Common myeloid progenitor, CD34-positive (primary cell): ENCODE measurements at regions of chr19 and their contacts with region 1.

Region 1: DNA sequence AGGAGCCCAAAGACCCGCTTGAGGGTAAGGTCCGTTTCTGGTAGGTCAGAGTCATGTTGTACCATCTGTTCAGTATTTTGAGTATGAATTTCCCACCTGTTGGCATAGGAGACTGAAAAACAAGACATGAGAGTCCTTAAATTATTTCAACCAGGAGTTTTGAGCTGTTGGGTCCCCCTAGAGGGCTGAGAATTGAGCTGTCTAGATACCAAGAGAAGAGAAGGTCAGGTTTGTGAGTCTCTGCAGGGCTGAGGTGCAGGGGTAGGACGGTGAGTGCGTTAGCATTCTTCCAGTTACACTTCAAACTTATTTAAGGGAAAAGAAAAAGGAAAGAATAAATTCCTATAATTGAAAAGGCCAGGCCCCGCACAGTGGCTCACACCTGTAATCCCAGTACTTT is 5.0 kb downstream of the CBLC start:
- DNase-seq: no peak
- H3K4me3 ChIP-seq: no peak overlapping the region
- H3K27ac ChIP-seq: no peak overlapping the region
- H3K4me1 ChIP-seq: peaks cover 0 to 14% (median 10%) of the 10 kb centered on the region in 4 experiments
- H3K27me3 ChIP-seq: peaks cover 0 to 2% (median 0%) of the 10 kb centered on the region in 5 experiments

Region 2: GRCh38 chr19:44796701-44797115 is 14.0 kb after region 1 on chr19:
- CTCF ChIA-PET with region 1: interaction called, 32 read pairs
- POLR2A ChIA-PET with region 1: no interaction called
- DNase-seq: peak; percentile 18 to 30 (median 25)
- H3K4me3 ChIP-seq: peak overlapping the region in 3 of 7 experiments; percentile 19 to 49 (median 45)
- H3K27ac ChIP-seq: peak overlapping the region in 1 of 2 experiments; percentile 12
- H3K4me1 ChIP-seq: peaks cover 0 to 23% (median 18%) of the 10 kb centered on the region in 4 experiments
- H3K27me3 ChIP-seq: no peaks in the 10 kb centered on the region

Region 3: GRCh38 chr19:44803442-44804428 is 21.0 kb after region 1 on chr19:
- CTCF ChIA-PET with region 1: interaction called, 32 read pairs
- POLR2A ChIA-PET with region 1: no interaction called
- DNase-seq: peak in 2 of 3 donors; percentile 36 to 41
- H3K4me3 ChIP-seq: no peak overlapping the region
- H3K27ac ChIP-seq: no peak overlapping the region
- H3K4me1 ChIP-seq: peaks cover 0 to 18% (median 15%) of the 10 kb centered on the region in 4 experiments
- H3K27me3 ChIP-seq: no peaks in the 10 kb centered on the region

Region 4: GRCh38 chr19:44883922-44884321 is 101.2 kb after region 1 on chr19:
- CTCF ChIA-PET with region 1: no interaction called
- POLR2A ChIA-PET with region 1: no interaction called
- DNase-seq: no peak
- H3K4me3 ChIP-seq: no peak overlapping the region
- H3K27ac ChIP-seq: no peak overlapping the region
- H3K4me1 ChIP-seq: no peaks in the 10 kb centered on the region
- H3K27me3 ChIP-seq: no peaks in the 10 kb centered on the region

Region 5: GRCh38 chr19:44927746-44928145 is 145.0 kb after region 1 on chr19:
- CTCF ChIA-PET with region 1: no interaction called
- POLR2A ChIA-PET with region 1: no interaction called
- DNase-seq: no peak
- H3K4me3 ChIP-seq: no peak overlapping the region
- H3K27ac ChIP-seq: no peak overlapping the region
- H3K4me1 ChIP-seq: peaks cover 0 to 30% (median 28%) of the 10 kb centered on the region in 4 experiments
- H3K27me3 ChIP-seq: no peaks in the 10 kb centered on the region